ENCODE measurements at regions of chr6 and their contacts with region 1.

Region 1: GRCh38 chr6:36765594-36766398 is 68.2 kb downstream of the RAB44 start:
- DNase-seq: peak; percentile 63
- H3K4me3 ChIP-seq: no peak overlapping the region
- H3K27ac ChIP-seq: no peak overlapping the region
- H3K4me1 ChIP-seq: peaks cover 21% of the 10 kb centered on the region
- H3K27me3 ChIP-seq: no peaks in the 10 kb centered on the region
- CTCF ChIP-seq: peak; percentile 94 to 98

Region 2: GRCh38 chr6:36681863-36682262 is 83.9 kb before region 1 on chr6:
- CTCF ChIA-PET with region 1: no interaction called
- dilution Hi-C with region 1: no loop called
- in situ Hi-C with region 1: no loop called
- intact Hi-C with region 1: no loop called
- DNase-seq: no peak
- H3K4me3 ChIP-seq: peak overlapping the region; percentile 19 to 39 (median 27)
- H3K27ac ChIP-seq: peak overlapping the region; percentile 91
- H3K4me1 ChIP-seq: peaks cover 41% of the 10 kb centered on the region
- H3K27me3 ChIP-seq: no peaks in the 10 kb centered on the region
- CTCF ChIP-seq: no peak

Region 3: DNA sequence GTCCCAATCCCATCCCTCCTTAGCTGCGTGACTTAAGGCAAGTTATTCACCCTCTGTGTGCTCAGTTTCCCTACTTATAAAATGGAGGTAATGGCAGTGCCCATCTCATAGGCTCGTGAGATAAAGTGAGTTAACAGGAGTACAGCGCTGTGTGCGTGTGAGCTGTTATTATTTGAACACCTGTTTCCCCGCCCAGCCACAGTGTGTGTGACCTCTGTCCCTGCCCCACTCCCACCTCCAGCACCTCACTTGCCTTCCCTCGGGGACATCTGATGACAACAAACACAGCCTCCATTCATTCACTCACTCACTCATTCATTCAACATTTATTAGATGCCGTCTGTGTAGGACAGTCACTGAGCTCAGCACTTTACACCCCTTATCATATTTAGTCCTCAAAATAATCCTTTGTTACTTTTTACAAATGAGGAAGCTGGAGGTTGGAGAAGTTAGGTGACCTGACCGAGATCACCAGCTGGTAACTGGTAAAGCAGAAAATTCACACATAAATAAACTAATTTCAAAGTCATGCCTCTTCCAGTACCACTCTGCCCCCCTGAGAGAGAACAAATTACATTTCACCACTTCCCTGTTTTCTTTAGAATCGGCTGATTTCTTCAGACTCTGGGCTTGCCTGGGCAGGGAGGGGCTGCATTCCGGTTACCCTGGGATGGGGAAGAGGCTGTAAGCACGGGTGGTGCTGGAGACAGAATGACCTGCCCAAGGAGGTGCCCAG is 14.8 kb after region 1 on chr6:
- CTCF ChIA-PET with region 1: no interaction called
- dilution Hi-C with region 1: no loop called
- in situ Hi-C with region 1: no loop called
- intact Hi-C with region 1: loop called (anchors 1 kb)
- DNase-seq: peak; percentile 11
- H3K4me3 ChIP-seq: no peak overlapping the region
- H3K27ac ChIP-seq: no peak overlapping the region
- H3K4me1 ChIP-seq: peaks cover 10% of the 10 kb centered on the region
- H3K27me3 ChIP-seq: no peaks in the 10 kb centered on the region
- CTCF ChIP-seq: no peak

Region 4: DNA sequence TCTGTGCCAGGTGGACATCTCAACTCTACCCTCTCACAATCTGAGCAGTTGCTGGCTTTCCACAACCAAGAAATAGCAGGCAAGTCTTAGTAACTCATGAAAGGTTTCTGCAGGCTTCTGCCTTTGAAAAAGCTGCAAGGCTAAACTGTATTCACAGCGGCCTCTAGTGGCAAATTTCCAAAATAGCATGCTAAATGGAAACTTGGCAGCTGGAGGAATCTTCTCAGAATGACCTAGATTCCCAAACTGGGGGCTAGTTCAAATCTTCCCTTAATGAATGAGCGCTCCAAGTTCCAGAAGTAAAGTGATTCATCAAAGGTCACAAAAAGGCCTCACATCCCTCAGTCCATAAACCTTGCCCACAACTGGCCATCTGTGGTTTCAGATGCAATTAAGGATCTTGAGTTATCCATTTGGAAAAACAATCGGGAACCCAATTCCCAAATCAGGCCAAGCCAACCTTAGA is 85.4 kb after region 1 on chr6:
- CTCF ChIA-PET with region 1: interaction called, 3 read pairs
- dilution Hi-C with region 1: no loop called
- in situ Hi-C with region 1: loop called (anchors 5 kb)
- intact Hi-C with region 1: loop called (anchors 1 kb)
- DNase-seq: peak; percentile 58
- H3K4me3 ChIP-seq: no peak overlapping the region
- H3K27ac ChIP-seq: no peak overlapping the region
- H3K4me1 ChIP-seq: peaks cover 28% of the 10 kb centered on the region
- H3K27me3 ChIP-seq: no peaks in the 10 kb centered on the region
- CTCF ChIP-seq: peak; percentile 83 to 85

Region 5: GRCh38 chr6:36907781-36908180 is 142.0 kb after region 1 on chr6:
- CTCF ChIA-PET with region 1: no interaction called
- dilution Hi-C with region 1: no loop called
- in situ Hi-C with region 1: no loop called
- intact Hi-C with region 1: no loop called
- DNase-seq: no peak
- H3K4me3 ChIP-seq: no peak overlapping the region
- H3K27ac ChIP-seq: no peak overlapping the region
- H3K4me1 ChIP-seq: peaks cover 10% of the 10 kb centered on the region
- H3K27me3 ChIP-seq: peaks cover 3% of the 10 kb centered on the region
- CTCF ChIP-seq: no peak

Region 6: GRCh38 chr6:36947570-36948351 is 182.0 kb after region 1 on chr6:
- CTCF ChIA-PET with region 1: no interaction called
- dilution Hi-C with region 1: no loop called
- in situ Hi-C with region 1: no loop called
- intact Hi-C with region 1: no loop called
- DNase-seq: peak; percentile 79
- H3K4me3 ChIP-seq: no peak overlapping the region
- H3K27ac ChIP-seq: no peak overlapping the region
- H3K4me1 ChIP-seq: peaks cover 27% of the 10 kb centered on the region
- H3K27me3 ChIP-seq: peaks cover 2% of the 10 kb centered on the region
- CTCF ChIP-seq: no peak

Region 7: GRCh38 chr6:37207903-37208456 is 442.2 kb after region 1 on chr6:
- CTCF ChIA-PET with region 1: no interaction called
- dilution Hi-C with region 1: no loop called
- in situ Hi-C with region 1: loop called (anchors 5 to 10 kb)
- intact Hi-C with region 1: loop called (anchors 1 kb)
- DNase-seq: peak; percentile 77
- H3K4me3 ChIP-seq: no peak overlapping the region
- H3K27ac ChIP-seq: no peak overlapping the region
- H3K4me1 ChIP-seq: peaks cover 7% of the 10 kb centered on the region
- H3K27me3 ChIP-seq: no peaks in the 10 kb centered on the region
- CTCF ChIP-seq: peak; percentile 86 to 91